Heart right ventricle (tissue), 16 donors: ENCODE measurements at regions of chr2 and their contacts with region 1.

Region 1: GRCh38 chr2:37877457-37878315 is 47.4 kb upstream of the RMDN2 start:
- DNase-seq: peak in 1 of 2 donors; percentile 65
- ATAC-seq: peak in 7 of 8 donors; percentile 39 to 77 (median 51)
- H3K4me3 ChIP-seq: no peak overlapping the region
- H3K27ac ChIP-seq: peak overlapping the region in 1 of 10 donors; percentile 29
- H3K4me1 ChIP-seq: peaks cover 4 to 46% (median 41%) of the 10 kb centered on the region in 9 donors
- H3K27me3 ChIP-seq: peaks cover 0 to 15% (median 0%) of the 10 kb centered on the region in 7 donors
- CTCF ChIP-seq: peak; percentile 71 to 88 (median 79)

Region 2: GRCh38 chr2:37173741-37174140 is 703.9 kb before region 1 on chr2:
- intact Hi-C with region 1: loop called in 1 of 10 experiments (anchors 10 kb)
- DNase-seq: no peak
- ATAC-seq: no peak
- H3K4me3 ChIP-seq: no peak overlapping the region
- H3K27ac ChIP-seq: no peak overlapping the region
- H3K4me1 ChIP-seq: no peaks in the 10 kb centered on the region
- H3K27me3 ChIP-seq: peaks cover 0 to 7% (median 0%) of the 10 kb centered on the region in 7 donors
- CTCF ChIP-seq: no peak

Region 3: DNA sequence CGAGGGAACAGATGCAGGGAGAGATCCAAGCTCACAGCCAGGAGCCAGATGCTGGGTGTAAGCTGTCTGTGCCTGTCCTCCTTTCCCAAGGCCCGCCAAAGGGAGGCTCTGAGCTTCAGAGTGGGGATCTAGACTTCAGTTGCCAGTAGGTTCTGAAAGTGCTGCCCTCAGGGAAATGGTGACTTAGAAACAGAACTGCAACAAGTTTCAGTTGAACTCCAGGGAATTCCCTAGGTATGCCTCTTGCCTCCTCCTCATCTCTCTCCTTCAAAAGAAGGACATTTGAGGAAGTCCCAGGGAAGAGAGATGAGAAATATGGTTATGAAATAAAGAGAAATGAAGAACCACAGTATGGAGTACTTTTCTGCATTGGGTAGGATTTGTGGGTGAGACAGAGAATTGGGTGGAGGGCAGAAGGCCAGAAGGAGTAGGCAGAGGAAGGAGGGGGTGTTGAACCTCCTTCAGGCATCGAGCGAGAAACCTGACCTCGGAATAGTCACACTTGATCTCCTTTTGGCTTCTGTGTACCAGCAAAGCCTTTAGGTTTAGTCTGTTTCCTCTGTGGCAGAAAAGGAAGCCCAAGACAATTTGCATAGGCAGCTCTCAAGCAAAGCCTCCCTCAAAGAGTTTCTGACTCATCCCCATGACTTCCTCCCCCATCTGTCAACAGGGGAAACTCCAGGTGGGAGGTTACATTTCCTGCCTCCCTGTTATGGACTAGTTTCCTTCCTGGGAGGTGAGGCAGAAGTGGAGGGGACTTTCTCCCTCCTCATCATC is 487.5 kb before region 1 on chr2:
- intact Hi-C with region 1: loop called in 5 of 10 experiments (anchors 5 kb)
- DNase-seq: peak in 1 of 2 donors; percentile 26
- ATAC-seq: peak in 6 of 8 donors; percentile 49 to 90 (median 77)
- H3K4me3 ChIP-seq: no peak overlapping the region
- H3K27ac ChIP-seq: peak overlapping the region in 7 of 10 donors; percentile 14 to 72 (median 48)
- H3K4me1 ChIP-seq: peaks cover 0 to 32% (median 16%) of the 10 kb centered on the region in 9 donors
- H3K27me3 ChIP-seq: no peaks in the 10 kb centered on the region
- CTCF ChIP-seq: no peak

Region 4: GRCh38 chr2:37405781-37406180 is 471.9 kb before region 1 on chr2:
- intact Hi-C with region 1: loop called in 4 of 10 experiments (anchors 5 kb)
- DNase-seq: no peak
- ATAC-seq: no peak
- H3K4me3 ChIP-seq: no peak overlapping the region
- H3K27ac ChIP-seq: no peak overlapping the region
- H3K4me1 ChIP-seq: no peaks in the 10 kb centered on the region
- H3K27me3 ChIP-seq: no peaks in the 10 kb centered on the region
- CTCF ChIP-seq: no peak

Region 5: DNA sequence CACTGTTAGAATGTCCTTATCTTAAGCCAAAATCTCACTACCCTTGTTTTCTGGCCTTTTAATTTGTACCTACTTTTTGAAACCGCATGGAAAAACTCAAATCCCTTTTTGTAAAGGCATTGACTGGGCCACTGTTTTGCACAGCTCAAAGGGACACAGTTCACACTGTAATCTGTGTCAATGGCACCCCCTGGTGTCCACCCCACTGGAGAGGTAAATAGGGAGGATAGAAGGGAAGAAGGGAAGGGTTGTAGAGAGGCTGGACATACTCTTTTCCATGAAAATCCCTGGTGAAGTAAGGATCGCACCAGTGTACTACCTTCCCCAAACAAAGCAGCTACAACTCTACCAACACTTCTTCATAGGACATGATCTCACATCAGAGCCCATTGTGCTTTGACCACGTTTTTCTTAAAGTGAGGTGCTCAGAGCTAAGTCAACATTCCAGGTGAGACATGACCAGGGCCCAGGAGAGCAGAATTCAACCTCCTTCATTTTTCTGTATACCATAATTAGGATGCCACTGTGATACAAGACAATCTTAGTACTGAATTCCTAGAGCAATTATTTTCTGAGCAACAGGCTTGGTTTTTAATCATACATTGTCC is 45.0 kb before region 1 on chr2:
- intact Hi-C with region 1: loop called in 8 of 10 experiments (anchors 2 to 10 kb)
- DNase-seq: peak; percentile 81 to 90
- ATAC-seq: peak; percentile 62 to 89 (median 82)
- H3K4me3 ChIP-seq: no peak overlapping the region
- H3K27ac ChIP-seq: peak overlapping the region in 4 of 10 donors; percentile 75 to 84 (median 81)
- H3K4me1 ChIP-seq: peaks cover 0 to 51% (median 38%) of the 10 kb centered on the region in 9 donors
- H3K27me3 ChIP-seq: no peaks in the 10 kb centered on the region
- CTCF ChIP-seq: peak; percentile 49 to 86 (median 80)